ENCODE measurements at regions of chr22 and their contacts with region 1.

Region 1: GRCh38 chr22:25709758-25710157 is 32.2 kb upstream of the MYO18B start:
- DNase-seq: peak; percentile 75
- ATAC-seq: peak; percentile 100
- H3K4me3 Mint-ChIP-seq: no peak overlapping the region
- H3K27ac Mint-ChIP-seq: peak overlapping the region; percentile 26
- H3K4me1 Mint-ChIP-seq: peaks cover 9% of the 10 kb centered on the region
- H3K27me3 Mint-ChIP-seq: no peaks in the 10 kb centered on the region

Region 2: DNA sequence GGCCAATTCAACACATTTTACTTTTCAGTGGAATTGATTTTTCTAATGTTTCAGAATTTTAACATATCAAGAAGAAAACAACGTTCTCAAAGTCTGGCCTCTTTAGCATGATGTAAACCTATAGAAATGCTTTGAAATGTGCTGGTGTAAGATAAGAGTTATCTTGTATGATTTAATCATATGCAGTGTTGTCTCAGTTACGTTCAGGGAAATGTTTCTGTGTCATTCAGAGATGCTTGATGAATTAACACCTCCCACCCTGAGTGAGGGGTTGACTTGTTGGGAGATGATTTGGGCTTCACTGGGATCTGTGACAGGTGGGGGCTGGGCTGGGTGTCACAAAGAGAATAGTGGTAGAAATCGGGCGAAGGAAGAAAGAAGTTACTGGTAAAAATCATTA is 16.5 kb after region 1 on chr22:
- CTCF ChIA-PET with region 1: interaction called, 3 read pairs
- POLR2A ChIA-PET with region 1: no interaction called
- intact Hi-C with region 1: loop called in 1 of 2 experiments (anchors 2 kb)
- DNase-seq: peak; percentile 39
- ATAC-seq: peak; percentile 87
- H3K4me3 Mint-ChIP-seq: no peak overlapping the region
- H3K27ac Mint-ChIP-seq: peak overlapping the region; percentile 42
- H3K4me1 Mint-ChIP-seq: peaks cover 4% of the 10 kb centered on the region
- H3K27me3 Mint-ChIP-seq: no peaks in the 10 kb centered on the region